Endothelial cell of umbilical vein (primary cell): ENCODE measurements at regions of chr5 and their contacts with region 1.

Region 1: GRCh38 chr5:151740336-151740942 is 18.0 kb downstream of the ATOX1 start:
- DNase-seq: peak; percentile 79
- H3K4me3 ChIP-seq: no peak overlapping the region
- H3K27ac ChIP-seq: peak overlapping the region; percentile 88
- H3K4me1 ChIP-seq: peaks cover 38% of the 10 kb centered on the region
- H3K27me3 ChIP-seq: no peaks in the 10 kb centered on the region
- CTCF ChIP-seq: peak; percentile 68 to 86
- POLR2A ChIP-seq: no peak

Region 2: DNA sequence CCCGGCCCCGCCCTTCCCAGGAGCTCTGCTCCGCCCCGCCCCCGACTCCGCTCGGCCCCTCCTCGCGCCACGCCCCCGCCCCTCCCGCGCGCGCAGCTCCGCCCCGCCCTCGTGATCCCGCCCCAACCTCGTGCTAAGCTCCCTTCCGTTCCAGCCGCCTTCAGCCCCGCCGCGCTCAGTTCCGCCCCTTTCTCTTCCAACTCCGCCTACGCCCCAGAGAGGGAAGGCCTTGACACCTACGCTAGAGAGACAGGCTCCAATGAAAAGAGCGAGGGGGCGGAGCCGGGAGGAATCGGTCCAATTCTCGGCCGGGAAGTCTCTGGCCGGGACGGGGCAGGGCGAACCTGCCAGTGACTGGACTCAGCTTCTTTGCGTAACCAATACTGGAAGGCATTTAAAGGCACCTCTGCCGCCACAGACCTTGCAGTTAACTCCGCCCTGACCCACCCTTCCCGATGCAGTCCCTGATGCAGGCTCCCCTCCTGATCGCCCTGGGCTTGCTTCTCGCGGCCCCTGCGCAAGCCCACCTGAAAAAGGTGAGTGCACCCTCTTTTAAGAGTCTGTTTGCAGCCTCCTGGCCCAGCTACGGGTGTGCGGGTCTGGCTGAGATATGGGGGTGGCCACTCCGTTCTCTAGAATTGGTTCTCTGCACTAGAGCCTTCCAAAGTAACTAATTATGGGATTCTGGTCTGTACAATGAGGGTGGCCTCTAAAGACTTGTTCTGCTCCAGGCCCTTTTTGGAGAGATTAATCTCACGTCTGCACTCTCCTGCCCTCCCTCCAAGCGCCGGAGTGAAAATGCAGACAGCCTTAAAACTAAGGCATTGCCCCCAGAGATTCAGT is 487.5 kb before region 1 on chr5 and contains the start of gene GM2A:
- CTCF ChIA-PET with region 1: interaction called, 3 read pairs
- POLR2A ChIA-PET with region 1: no interaction called
- dilution Hi-C with region 1: no loop called
- intact Hi-C with region 1: loop called (anchors 5 kb)
- DNase-seq: peak; percentile 100
- H3K4me3 ChIP-seq: peak within 1 kb of the TSS; percentile 48 to 75 (median 55)
- H3K27ac ChIP-seq: no peak within 1 kb of the TSS
- H3K4me1 ChIP-seq: peaks cover 5% of the 10 kb centered on the region
- H3K27me3 ChIP-seq: no peaks in the 10 kb centered on the region
- CTCF ChIP-seq: no peak
- POLR2A ChIP-seq: peak; percentile 46
- total RNA-seq, gene GM2A: 21.2 and 22.5 TPM in 2 replicates

Region 3: GRCh38 chr5:151499501-151500035 is 240.9 kb before region 1 on chr5:
- CTCF ChIA-PET with region 1: no interaction called
- POLR2A ChIA-PET with region 1: no interaction called
- dilution Hi-C with region 1: no loop called
- intact Hi-C with region 1: loop called (anchors 1 kb)
- DNase-seq: no peak
- H3K4me3 ChIP-seq: no peak overlapping the region
- H3K27ac ChIP-seq: no peak overlapping the region
- H3K4me1 ChIP-seq: no peaks in the 10 kb centered on the region
- H3K27me3 ChIP-seq: no peaks in the 10 kb centered on the region
- CTCF ChIP-seq: no peak
- POLR2A ChIP-seq: no peak

Region 4: DNA sequence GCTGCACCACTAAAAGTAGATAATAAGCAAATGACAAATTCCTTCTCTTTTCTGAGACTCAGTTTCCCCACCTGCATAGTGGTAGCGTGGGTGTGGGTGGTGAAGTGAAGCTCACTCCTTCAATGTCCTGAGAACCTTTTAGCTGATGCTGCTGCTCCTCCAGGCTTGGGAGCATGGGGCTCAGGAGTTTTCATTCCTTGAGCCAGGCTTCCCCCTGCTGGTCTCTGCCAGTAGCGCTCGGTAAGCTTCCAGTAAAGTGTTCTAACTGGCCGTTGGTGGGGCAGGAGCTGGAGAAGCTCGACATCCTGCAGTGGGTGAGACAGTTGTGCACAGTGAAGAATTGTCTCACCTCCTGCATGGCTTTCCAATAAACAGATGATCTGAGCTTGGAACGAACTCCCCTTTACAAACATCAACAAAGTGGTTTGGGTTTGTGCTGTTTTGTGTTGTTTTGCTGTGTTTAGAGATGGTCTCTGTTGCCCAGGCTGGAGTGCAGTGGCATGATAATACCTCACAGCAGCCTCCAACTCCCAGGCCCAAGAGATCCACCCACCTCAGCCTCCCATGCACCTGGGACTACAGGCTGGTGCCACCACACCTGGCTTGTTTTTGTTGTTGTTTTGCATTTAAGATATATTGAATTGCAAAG is 88.3 kb before region 1 on chr5:
- CTCF ChIA-PET with region 1: interaction called, 323 read pairs
- POLR2A ChIA-PET with region 1: no interaction called
- dilution Hi-C with region 1: no loop called
- intact Hi-C with region 1: no loop called
- DNase-seq: peak; percentile 80
- H3K4me3 ChIP-seq: no peak overlapping the region
- H3K27ac ChIP-seq: no peak overlapping the region
- H3K4me1 ChIP-seq: no peaks in the 10 kb centered on the region
- H3K27me3 ChIP-seq: peaks cover 0 to 4% of the 10 kb centered on the region in 2 experiments
- CTCF ChIP-seq: peak; percentile 88 to 92
- POLR2A ChIP-seq: no peak

Region 5: GRCh38 chr5:151686674-151687407 is 53.6 kb before region 1 on chr5 and contains the start of gene SPARC:
- CTCF ChIA-PET with region 1: interaction called, 30 read pairs
- POLR2A ChIA-PET with region 1: interaction called, 12 read pairs
- dilution Hi-C with region 1: no loop called
- intact Hi-C with region 1: loop called (anchors 1 kb)
- DNase-seq: peak; percentile 85
- H3K4me3 ChIP-seq: peak within 1 kb of the TSS; percentile 73 to 98 (median 89)
- H3K27ac ChIP-seq: peak within 1 kb of the TSS; percentile 84
- H3K4me1 ChIP-seq: peaks cover 38% of the 10 kb centered on the region
- H3K27me3 ChIP-seq: no peaks in the 10 kb centered on the region
- CTCF ChIP-seq: no peak
- POLR2A ChIP-seq: peak; percentile 100
- total RNA-seq, gene SPARC: 3,114 and 3,174 TPM in 2 replicates

Region 6: GRCh38 chr5:151751091-151751490 is 10.7 kb after region 1 on chr5:
- CTCF ChIA-PET with region 1: interaction called, 11 read pairs
- POLR2A ChIA-PET with region 1: no interaction called
- dilution Hi-C with region 1: no loop called
- intact Hi-C with region 1: no loop called
- DNase-seq: no peak
- H3K4me3 ChIP-seq: no peak overlapping the region
- H3K27ac ChIP-seq: no peak overlapping the region
- H3K4me1 ChIP-seq: peaks cover 6% of the 10 kb centered on the region
- H3K27me3 ChIP-seq: no peaks in the 10 kb centered on the region
- CTCF ChIP-seq: no peak
- POLR2A ChIP-seq: no peak